Head of caudate nucleus (tissue), 42 donors: ENCODE measurements at regions of chr6 and their contacts with region 1.

Region 1: DNA sequence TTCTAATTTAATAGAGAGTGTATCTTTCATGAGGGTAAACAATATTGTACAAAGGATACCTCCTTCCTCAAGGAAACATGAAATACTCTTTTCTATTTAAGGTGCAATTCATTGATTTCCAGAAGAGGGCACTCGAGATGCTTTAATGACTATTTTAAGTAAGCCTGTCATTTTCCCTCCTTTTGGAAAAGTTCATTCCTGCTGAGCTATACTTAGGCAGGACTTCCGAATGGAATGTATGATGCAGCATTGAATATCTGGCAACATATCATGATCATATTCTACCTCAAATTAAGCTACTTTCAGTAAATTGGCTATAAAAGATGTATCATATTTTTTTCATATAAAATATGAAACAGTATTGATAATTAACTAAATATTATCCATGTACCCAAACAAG is 5.0 kb downstream of the DST start:
- DNase-seq: peak in 1 of 42 donors; percentile 30

Region 2: DNA sequence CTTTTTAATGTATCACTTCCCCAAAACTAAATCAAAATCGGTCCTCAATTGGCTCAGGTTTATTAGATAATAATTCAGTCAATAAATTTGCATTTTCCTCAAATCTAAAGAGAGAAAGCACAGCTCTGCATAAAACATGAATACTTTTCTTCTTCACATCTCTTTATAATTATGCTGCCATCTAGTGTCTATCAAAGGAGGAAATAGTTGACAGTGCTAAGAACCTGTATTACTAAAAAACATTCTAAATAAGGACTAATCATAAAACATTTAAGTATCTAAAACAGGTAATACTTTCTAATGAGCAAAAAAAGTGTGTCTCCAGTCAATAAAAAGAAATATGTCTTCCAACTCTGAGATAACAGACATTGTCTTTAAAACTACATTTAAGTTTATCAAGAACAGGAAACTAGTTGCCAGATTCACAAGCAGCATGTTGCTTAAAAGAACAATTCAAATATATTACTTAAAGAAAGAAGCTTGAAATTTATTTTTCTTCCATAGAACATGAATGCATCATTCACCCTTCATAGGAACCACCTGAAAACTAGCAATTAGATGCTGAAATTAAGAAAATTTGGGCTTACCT is 61.5 kb after region 1 on chr6:
- intact Hi-C with region 1: loop called (anchors 5 kb)
- DNase-seq: no peak

Region 3: GRCh38 chr6:56764081-56764566 is 126.5 kb after region 1 on chr6:
- intact Hi-C with region 1: loop called (anchors 10 kb)
- DNase-seq: peak in 22 of 42 donors; percentile 35 to 82 (median 60)

Region 4: GRCh38 chr6:56851541-56852259 is 214.1 kb after region 1 on chr6:
- intact Hi-C with region 1: loop called (anchors 2 kb)
- DNase-seq: peak; percentile 25 to 88 (median 62)